Endothelial cell of umbilical vein (primary cell): ENCODE measurements at regions of chr12 and their contacts with region 1.

Region 1: GRCh38 chr12:64890873-64891468 is 66.5 kb downstream of the TBC1D30 start:
- DNase-seq: peak; percentile 67
- H3K4me3 ChIP-seq: no peak overlapping the region
- H3K27ac ChIP-seq: no peak overlapping the region
- H3K4me1 ChIP-seq: peaks cover 36% of the 10 kb centered on the region
- H3K27me3 ChIP-seq: no peaks in the 10 kb centered on the region
- CTCF ChIP-seq: peak; percentile 35 to 53
- POLR2A ChIP-seq: no peak

Region 2: DNA sequence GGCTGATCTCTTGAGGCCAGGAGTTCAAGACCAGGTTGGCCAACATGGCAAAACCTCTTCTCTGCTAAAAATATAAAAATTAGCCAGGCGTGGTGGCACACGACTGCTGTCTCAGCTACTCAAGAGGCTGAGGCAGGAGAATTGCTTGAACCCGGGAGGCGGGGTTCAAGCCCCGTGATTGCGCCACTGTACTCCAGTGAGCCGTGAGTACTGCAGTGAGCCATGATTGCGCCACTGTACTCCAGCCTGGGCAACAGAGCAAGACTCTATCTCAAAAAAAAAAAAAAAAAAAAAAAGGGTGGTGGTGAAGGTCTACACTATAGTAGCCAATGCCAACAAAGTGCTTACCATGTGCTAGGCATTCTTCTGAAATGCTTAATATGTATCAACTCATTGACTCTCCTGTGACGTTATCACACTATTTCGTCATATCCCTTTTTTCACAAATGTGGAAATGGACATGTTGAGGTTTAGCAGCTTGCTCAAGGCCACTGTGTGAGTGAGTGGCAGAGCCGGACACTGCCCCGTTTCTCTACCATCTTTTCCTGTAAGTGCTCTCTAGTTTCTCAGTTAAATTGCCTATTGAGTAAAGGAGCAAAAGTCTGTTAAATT is 191.4 kb before region 1 on chr12:
- CTCF ChIA-PET with region 1: no interaction called
- POLR2A ChIA-PET with region 1: no interaction called
- dilution Hi-C with region 1: no loop called
- intact Hi-C with region 1: no loop called
- DNase-seq: no peak
- H3K4me3 ChIP-seq: no peak overlapping the region
- H3K27ac ChIP-seq: no peak overlapping the region
- H3K4me1 ChIP-seq: no peaks in the 10 kb centered on the region
- H3K27me3 ChIP-seq: no peaks in the 10 kb centered on the region
- CTCF ChIP-seq: no peak
- POLR2A ChIP-seq: no peak

Region 3: DNA sequence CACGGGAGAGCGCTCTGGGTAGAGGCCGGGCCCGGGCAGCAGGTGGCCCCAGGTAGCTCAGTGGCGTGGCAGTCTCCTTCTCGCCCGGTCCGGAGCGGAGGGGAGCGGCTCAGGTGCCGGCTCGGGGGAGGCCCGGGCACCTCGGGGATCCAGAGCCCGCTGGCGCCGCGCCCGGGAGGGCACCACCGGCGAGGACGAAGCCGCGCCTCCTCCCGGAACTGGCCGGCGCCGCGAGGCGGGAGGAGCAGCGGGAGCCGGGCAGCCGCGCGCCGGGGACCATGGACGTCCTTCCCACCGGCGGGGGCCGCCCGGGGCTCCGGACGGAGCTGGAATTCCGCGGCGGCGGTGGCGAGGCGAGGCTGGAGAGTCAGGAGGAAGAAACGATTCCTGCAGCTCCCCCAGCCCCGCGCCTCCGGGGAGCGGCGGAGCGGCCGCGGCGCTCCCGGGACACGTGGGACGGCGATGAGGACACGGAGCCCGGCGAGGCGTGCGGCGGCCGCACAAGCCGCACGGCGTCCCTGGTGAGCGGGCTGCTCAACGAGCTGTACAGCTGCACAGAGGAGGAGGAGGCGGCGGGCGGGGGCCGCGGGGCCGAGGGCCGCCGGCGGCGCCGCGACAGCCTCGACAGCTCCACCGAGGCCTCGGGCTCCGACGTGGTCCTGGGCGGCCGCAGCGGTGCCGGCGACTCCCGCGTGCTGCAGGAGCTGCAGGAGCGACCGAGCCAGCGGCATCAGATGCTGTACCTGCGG is 110.3 kb before region 1 on chr12:
- CTCF ChIA-PET with region 1: no interaction called
- POLR2A ChIA-PET with region 1: no interaction called
- dilution Hi-C with region 1: no loop called
- intact Hi-C with region 1: no loop called
- DNase-seq: peak; percentile 43
- H3K4me3 ChIP-seq: peak overlapping the region; percentile 23 to 64 (median 49)
- H3K27ac ChIP-seq: no peak overlapping the region
- H3K4me1 ChIP-seq: peaks cover 16% of the 10 kb centered on the region
- H3K27me3 ChIP-seq: peaks cover 4 to 19% of the 10 kb centered on the region in 2 experiments
- CTCF ChIP-seq: no peak
- POLR2A ChIP-seq: no peak

Region 4: GRCh38 chr12:64801381-64801780 is 89.6 kb before region 1 on chr12:
- CTCF ChIA-PET with region 1: interaction called, 18 read pairs
- POLR2A ChIA-PET with region 1: no interaction called
- dilution Hi-C with region 1: no loop called
- intact Hi-C with region 1: loop called (anchors 2 kb)
- DNase-seq: peak; percentile 33
- H3K4me3 ChIP-seq: no peak overlapping the region
- H3K27ac ChIP-seq: no peak overlapping the region
- H3K4me1 ChIP-seq: no peaks in the 10 kb centered on the region
- H3K27me3 ChIP-seq: no peaks in the 10 kb centered on the region
- CTCF ChIP-seq: peak; percentile 17 to 33
- POLR2A ChIP-seq: no peak

Region 5: DNA sequence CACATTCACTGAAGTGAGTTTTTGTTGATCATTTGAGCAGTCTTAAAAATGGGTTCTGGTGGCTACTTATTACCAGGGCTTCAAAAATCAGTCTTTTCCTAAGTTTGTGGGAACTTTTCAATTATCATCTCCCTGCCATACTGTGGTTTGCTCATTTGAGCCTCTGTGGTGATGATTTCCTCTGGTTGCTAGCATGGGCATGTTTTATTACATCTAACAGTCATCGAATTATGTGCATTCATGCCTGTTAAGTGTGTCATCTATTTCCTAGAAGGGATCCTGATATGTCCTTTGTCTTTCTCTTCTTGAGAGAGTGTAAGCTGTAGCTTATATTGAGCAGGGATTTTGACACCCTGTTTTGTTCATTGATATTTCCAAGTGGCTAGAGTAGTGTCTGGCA is 113.3 kb after region 1 on chr12:
- CTCF ChIA-PET with region 1: no interaction called
- POLR2A ChIA-PET with region 1: no interaction called
- dilution Hi-C with region 1: no loop called
- intact Hi-C with region 1: no loop called
- DNase-seq: no peak
- H3K4me3 ChIP-seq: no peak overlapping the region
- H3K27ac ChIP-seq: no peak overlapping the region
- H3K4me1 ChIP-seq: no peaks in the 10 kb centered on the region
- H3K27me3 ChIP-seq: peaks cover 0 to 4% of the 10 kb centered on the region in 2 experiments
- CTCF ChIP-seq: no peak
- POLR2A ChIP-seq: no peak

Region 6: DNA sequence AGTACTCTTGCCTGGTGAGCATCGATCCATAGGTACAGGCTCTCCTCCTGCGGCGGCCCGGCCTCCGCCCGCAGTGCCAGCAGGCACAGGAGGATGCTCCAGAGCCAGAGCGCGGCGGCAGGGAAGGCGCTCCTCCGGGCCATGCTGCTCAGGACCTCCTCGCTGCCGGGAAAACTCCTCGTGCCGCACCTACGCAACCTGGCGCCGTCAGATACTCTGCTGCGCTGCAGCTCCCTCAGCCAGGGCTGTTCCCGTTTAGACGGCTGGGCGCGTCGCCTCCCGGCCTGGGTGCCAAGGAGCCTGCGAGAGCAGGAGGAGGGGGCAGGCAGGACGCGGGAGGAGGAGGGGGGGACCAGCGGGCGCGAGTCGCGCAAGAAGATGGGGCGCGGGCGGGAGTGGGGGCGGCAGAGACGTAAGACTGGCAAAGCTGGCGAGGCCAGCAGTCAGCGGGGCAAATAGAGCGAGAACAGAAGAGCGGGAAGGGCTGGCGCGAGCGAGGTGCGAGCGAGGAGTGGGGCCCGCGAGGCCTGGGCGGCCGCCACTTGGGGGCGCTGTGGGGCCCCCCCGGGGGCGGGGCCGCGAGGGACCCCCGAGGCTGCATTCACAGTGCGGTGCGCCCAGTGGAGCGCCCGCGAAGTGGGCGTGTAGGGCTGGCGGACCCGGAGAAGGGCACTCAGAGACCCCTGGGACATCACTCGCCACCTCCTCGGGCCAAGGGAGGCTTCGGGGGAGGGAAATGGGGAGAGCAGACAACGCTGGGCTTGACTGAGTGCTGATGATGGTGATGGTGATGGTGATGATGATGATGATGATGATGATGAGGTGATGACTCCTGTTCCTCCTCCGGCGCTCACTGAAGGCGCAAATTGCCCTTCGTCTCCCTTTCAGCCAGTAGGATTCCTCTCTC is 230.3 kb after region 1 on chr12 and contains the start of gene WIF1:
- CTCF ChIA-PET with region 1: interaction called, 60 read pairs
- POLR2A ChIA-PET with region 1: no interaction called
- dilution Hi-C with region 1: no loop called
- intact Hi-C with region 1: loop called (anchors 1 kb)
- DNase-seq: peak; percentile 22
- H3K4me3 ChIP-seq: peak within 1 kb of the TSS; percentile 12 to 21 (median 13)
- H3K27ac ChIP-seq: no peak within 1 kb of the TSS
- H3K4me1 ChIP-seq: peaks cover 2% of the 10 kb centered on the region
- H3K27me3 ChIP-seq: peaks cover 36 to 67% of the 10 kb centered on the region in 2 experiments
- CTCF ChIP-seq: peak; percentile 59 to 69
- POLR2A ChIP-seq: no peak
- total RNA-seq, gene WIF1: not detected in 2 replicates

Region 7: GRCh38 chr12:65306366-65307168 is 415.6 kb after region 1 on chr12:
- CTCF ChIA-PET with region 1: no interaction called
- POLR2A ChIA-PET with region 1: no interaction called
- dilution Hi-C with region 1: no loop called
- intact Hi-C with region 1: loop called (anchors 2 kb)
- DNase-seq: peak; percentile 83
- H3K4me3 ChIP-seq: peak overlapping the region in 1 of 3 experiments; percentile 44
- H3K27ac ChIP-seq: peak overlapping the region; percentile 96
- H3K4me1 ChIP-seq: peaks cover 46% of the 10 kb centered on the region
- H3K27me3 ChIP-seq: no peaks in the 10 kb centered on the region
- CTCF ChIP-seq: peak; percentile 51 to 53
- POLR2A ChIP-seq: no peak

Region 8: DNA sequence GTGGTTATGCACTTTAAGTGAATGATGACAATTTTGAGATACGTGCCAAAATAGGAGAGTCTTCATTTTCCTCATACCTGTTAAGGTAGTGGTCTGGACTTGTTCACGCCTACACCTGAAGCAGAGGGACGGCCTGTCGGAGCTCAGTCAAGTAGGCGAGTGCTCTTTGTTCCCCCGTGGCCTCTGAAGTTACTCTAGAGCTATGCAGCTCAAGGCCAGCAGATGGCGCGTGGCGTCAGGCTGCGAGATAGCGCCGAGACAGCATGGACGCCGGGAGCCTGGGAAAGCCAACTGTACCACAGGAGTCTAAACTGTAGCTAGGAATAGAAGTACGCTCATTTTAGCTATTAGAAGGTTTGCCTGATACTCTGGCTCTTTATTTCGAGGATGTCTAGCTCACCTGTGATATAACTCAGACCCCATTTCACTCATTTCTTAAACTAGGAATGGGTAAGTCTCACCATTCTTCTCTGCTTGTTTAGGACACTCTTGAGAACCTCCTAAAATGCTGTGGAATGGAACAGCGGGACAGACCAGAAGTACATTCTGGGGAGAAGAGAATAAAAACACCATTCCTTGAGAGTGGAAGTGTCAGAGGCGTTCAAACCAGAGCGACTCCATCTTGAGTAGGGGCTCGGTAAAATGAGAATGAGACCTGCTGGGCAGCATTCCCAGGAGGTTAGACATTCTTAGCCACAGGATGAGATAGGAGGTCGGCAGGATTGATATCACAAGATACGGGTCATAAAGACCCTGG is 665.9 kb after region 1 on chr12:
- CTCF ChIA-PET with region 1: no interaction called
- POLR2A ChIA-PET with region 1: no interaction called
- dilution Hi-C with region 1: no loop called
- intact Hi-C with region 1: no loop called
- DNase-seq: peak; percentile 88
- H3K4me3 ChIP-seq: no peak overlapping the region
- H3K27ac ChIP-seq: peak overlapping the region; percentile 47
- H3K4me1 ChIP-seq: peaks cover 17% of the 10 kb centered on the region
- H3K27me3 ChIP-seq: no peaks in the 10 kb centered on the region
- CTCF ChIP-seq: peak; percentile 88 to 96
- POLR2A ChIP-seq: no peak

Region 9: GRCh38 chr12:66087365-66087943 is 1196.5 kb after region 1 on chr12:
- CTCF ChIA-PET with region 1: no interaction called
- POLR2A ChIA-PET with region 1: no interaction called
- dilution Hi-C with region 1: no loop called
- intact Hi-C with region 1: loop called (anchors 1 kb)
- DNase-seq: peak; percentile 67
- H3K4me3 ChIP-seq: no peak overlapping the region
- H3K27ac ChIP-seq: no peak overlapping the region
- H3K4me1 ChIP-seq: peaks cover 2% of the 10 kb centered on the region
- H3K27me3 ChIP-seq: no peaks in the 10 kb centered on the region
- CTCF ChIP-seq: peak; percentile 65 to 76
- POLR2A ChIP-seq: no peak